GM12878 (cell line): ENCODE measurements at regions of chr11 and their contacts with region 1.

Region 1: GRCh38 chr11:71448257-71449171 is at the start of gene DHCR7:
- DNase-seq: peak; percentile 76
- ATAC-seq: peak; percentile 92
- H3K4me3 ChIP-seq: peak within 1 kb of the TSS; percentile 85
- H3K27ac ChIP-seq: peak within 1 kb of the TSS; percentile 59
- H3K4me1 ChIP-seq: peaks cover 9% of the 10 kb centered on the region; the same call in 1 of the 2 replicates
- H3K27me3 ChIP-seq: no peaks in the 10 kb centered on the region
- CTCF ChIP-seq: no peak
- EP300 ChIP-seq: no peak
- POLR2A ChIP-seq: peak; percentile 89
- RAD21 ChIP-seq: no peak
- polyA plus RNA-seq, gene DHCR7: 4.2 to 13.8 TPM

Region 2: GRCh38 chr11:70901951-70902521 is 546.5 kb before region 1 on chr11:
- CTCF ChIA-PET with region 1: no interaction called
- POLR2A ChIA-PET with region 1: no interaction called
- RAD21 ChIA-PET with region 1: no interaction called
- SMC1A ChIA-PET with region 1: no interaction called
- in situ Hi-C with region 1: no loop called
- intact Hi-C with region 1: no loop called
- DNase-seq: no peak
- ATAC-seq: peak; percentile 55
- H3K4me3 ChIP-seq: no peak overlapping the region
- H3K27ac ChIP-seq: no peak overlapping the region
- H3K4me1 ChIP-seq: no peaks in the 10 kb centered on the region
- H3K27me3 ChIP-seq: no peaks in the 10 kb centered on the region
- CTCF ChIP-seq: no peak
- EP300 ChIP-seq: no peak
- POLR2A ChIP-seq: no peak
- RAD21 ChIP-seq: no peak

Region 3: DNA sequence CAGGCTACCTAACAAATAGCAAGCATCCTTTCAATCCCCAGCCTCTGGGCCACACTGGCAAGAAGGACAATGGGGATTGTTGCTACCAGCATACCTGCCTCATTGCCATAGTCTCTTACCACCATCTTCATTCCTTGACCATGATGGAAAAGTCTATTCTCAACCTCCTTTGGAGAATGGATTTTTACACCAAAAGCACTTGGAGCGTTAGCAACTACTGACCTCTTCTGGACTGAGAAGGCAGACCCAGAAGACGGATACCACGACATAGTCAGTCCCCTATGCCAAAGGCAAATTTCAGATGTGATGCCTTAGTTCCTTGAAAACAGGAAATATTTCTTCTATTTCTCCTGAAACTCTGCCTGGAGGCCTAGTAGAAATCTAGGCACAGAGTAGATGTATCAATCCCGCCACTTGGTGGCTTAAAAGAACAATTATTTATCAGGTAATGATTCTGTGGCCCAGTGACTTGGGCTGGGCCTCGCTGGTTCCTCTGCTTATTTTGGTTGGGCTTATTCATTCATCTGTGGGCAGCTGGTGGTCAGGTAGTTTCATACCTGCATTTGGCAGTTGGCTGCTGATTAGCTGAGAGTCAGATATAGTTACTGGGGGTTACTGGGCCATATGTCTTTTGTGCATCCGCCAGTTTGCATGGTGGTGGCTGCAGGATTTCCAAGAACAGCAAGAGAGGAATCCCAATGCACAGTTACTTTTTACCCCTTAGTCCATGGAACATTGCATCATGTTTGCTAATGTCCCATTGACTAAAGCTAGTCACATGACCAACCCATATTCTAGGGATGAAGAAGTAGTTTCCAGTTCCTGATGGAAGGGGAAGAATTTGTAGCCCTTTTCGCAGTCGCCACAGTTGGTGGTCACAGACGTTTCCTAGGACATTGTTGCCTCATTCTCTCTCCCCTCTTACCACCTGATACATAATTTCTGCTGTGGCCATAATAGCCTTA is 75.5 kb before region 1 on chr11:
- CTCF ChIA-PET with region 1: interaction called, 3 read pairs
- POLR2A ChIA-PET with region 1: no interaction called
- RAD21 ChIA-PET with region 1: interaction called, 5 read pairs
- SMC1A ChIA-PET with region 1: interaction called, 6 read pairs
- in situ Hi-C with region 1: no loop called
- intact Hi-C with region 1: loop called (anchors 2 kb)
- DNase-seq: peak; percentile 53
- ATAC-seq: peak; percentile 85
- H3K4me3 ChIP-seq: peak overlapping the region; percentile 34; the same call in 1 of the 2 replicates
- H3K27ac ChIP-seq: peak overlapping the region; percentile 60
- H3K4me1 ChIP-seq: peaks cover 34% of the 10 kb centered on the region
- H3K27me3 ChIP-seq: no peaks in the 10 kb centered on the region
- CTCF ChIP-seq: peak; percentile 13 to 25 (median 20); a peak in 2 of 6 replicates
- EP300 ChIP-seq: peak in 1 of 2 experiments; percentile 38; a peak in 2 of 4 replicates
- POLR2A ChIP-seq: no peak
- RAD21 ChIP-seq: 0 out of 2 replicates have a peak, but pooled peaks have one; percentile 13

Region 4: DNA sequence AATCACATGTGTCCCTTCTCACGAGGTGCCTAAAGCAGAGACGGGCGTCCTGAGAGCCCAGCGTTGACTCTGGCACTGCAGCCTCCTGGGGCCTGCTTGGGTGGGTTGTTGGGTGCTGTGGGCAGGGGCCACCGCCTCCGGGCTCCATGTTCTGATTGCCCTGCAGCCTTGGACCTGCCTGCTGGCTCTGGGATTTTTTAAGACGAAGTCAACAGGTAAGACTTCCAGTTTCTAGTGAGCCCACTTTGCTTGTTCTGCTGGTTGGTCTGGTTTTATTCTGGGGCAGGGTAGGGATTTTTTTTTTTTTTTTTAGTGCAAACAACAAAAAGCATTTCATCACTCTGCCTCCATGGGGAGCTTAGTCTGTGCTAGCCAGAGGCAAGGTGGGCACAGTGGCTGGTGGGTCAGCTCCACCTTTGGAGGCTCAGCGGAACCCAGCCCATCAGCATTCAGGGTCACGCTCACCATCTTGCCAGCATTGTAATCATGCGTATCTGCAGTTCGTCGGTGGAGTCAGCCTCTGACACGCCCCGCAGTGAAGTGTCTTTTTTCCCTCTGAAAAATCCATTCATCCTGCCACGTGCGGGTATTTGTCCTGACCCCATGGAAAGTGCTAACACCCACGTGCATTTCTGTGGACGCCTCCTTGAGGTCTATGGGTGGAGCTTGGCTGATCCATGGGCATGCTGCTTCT is 32.8 kb after region 1 on chr11:
- CTCF ChIA-PET with region 1: no interaction called
- POLR2A ChIA-PET with region 1: no interaction called
- RAD21 ChIA-PET with region 1: no interaction called
- SMC1A ChIA-PET with region 1: no interaction called
- in situ Hi-C with region 1: no loop called
- intact Hi-C with region 1: no loop called
- DNase-seq: no peak
- ATAC-seq: no peak
- H3K4me3 ChIP-seq: no peak overlapping the region
- H3K27ac ChIP-seq: no peak overlapping the region
- H3K4me1 ChIP-seq: no peaks in the 10 kb centered on the region
- H3K27me3 ChIP-seq: no peaks in the 10 kb centered on the region
- CTCF ChIP-seq: no peak
- EP300 ChIP-seq: no peak
- POLR2A ChIP-seq: no peak
- RAD21 ChIP-seq: no peak

Region 5: DNA sequence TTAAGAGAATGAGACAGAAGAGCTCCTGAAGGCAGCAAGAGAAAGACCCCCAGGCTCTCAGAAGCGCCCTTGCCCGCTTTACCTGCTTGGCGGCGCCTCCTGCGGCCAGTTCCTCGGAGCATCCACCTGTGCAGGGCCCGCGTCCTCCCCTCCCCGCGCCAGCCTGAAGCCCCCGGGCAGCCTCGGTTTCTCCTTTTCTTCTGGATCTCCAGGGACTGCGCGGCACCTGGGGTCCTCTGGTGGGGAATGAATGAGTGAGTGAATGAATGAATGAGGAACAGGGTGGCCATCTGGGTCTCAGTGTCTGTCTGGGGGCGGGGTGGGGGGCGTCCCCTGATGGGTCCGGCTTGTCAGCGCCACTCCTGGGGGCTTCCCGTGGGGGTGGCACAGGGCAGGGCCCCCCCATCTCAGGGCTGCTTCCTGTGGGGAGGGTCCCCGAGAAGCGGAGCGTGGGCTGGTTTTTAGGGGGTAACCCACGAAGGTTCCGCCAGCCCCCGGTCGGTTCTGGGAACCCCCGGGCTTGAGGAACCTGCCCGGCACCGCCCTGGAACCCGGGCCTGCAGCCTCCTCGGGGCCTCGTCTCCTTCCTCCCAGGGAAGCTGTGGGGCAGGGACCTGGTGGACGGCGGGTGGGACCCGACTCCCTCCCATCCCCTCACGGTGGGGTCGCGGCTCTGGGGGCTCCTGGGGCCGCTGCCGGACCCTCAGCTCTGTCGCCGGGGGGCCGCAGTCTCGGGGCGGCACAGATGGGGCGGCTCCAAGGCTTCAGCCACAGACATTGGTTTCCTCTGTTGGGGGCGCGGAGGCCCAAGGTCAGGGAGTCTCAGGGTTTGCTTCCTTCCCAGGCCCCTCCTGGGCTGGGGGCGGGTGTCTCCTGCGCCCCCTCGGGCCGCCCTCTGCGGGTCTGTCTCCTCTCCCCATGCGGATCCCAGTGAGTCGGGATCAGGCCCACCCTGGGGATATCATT is 70.3 kb after region 1 on chr11:
- CTCF ChIA-PET with region 1: no interaction called
- POLR2A ChIA-PET with region 1: no interaction called
- RAD21 ChIA-PET with region 1: no interaction called
- SMC1A ChIA-PET with region 1: no interaction called
- in situ Hi-C with region 1: no loop called
- intact Hi-C with region 1: no loop called
- DNase-seq: no peak
- ATAC-seq: no peak
- H3K4me3 ChIP-seq: no peak overlapping the region
- H3K27ac ChIP-seq: no peak overlapping the region
- H3K4me1 ChIP-seq: no peaks in the 10 kb centered on the region
- H3K27me3 ChIP-seq: no peaks in the 10 kb centered on the region
- CTCF ChIP-seq: no peak
- EP300 ChIP-seq: no peak
- POLR2A ChIP-seq: no peak
- RAD21 ChIP-seq: no peak